GM10248 (cell line): ENCODE measurements at regions of chr3 and their contacts with region 1.

Region 1: DNA sequence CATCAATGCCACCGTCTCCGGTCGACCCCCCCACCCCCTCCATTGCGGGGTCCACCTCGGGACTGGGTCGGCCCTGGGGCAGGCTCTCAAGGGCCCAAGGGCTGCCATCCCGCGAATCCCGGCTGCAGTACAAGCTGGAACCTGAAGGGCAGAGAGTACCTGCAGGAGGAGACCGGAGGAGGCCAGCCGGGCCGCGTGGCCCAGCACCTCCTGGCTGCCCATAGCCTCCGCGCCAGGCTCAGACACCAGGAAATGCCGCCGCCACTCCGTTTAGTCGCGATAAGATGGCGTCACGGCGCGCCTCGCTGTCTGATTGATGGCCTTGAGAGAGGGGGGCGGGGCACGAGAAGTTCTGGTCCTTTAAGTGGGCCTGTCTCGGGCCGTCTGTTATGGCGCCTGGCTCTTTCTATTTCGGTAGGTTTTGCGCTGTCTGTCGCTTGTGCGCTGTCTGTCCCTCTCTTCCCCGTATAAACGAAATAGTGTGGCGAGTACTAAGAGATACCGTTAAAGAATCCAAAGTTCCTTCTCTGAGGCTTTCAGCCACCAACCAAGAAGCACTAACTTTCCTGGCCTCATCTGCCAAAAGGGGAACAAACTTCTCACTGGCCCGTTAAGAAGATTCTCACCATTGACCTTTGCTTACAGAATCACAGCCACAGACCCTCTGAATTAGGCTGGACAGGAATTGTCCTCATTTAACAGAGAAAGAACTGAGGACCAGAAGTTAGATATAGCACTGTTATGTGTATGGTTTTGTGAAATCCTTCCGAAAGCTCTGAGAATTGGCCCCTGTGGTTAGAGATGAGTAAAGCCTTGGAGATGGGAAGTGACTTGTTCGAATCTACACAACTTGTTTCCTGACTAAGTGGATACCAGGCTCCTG is at the start of gene RFT1:
- DNase-seq: peak; percentile 94
- CTCF ChIP-seq: no peak

Region 2: GRCh38 chr3:53114011-53114400 is 16.4 kb before region 1 on chr3:
- CTCF ChIA-PET with region 1: interaction called, 140 read pairs
- POLR2A ChIA-PET with region 1: no interaction called
- DNase-seq: peak; percentile 84
- CTCF ChIP-seq: peak; percentile 89

Region 3: GRCh38 chr3:53140847-53141845 is 10.7 kb after region 1 on chr3:
- CTCF ChIA-PET with region 1: interaction called, 114 read pairs
- POLR2A ChIA-PET with region 1: no interaction called
- DNase-seq: no peak
- CTCF ChIP-seq: no peak

Region 4: DNA sequence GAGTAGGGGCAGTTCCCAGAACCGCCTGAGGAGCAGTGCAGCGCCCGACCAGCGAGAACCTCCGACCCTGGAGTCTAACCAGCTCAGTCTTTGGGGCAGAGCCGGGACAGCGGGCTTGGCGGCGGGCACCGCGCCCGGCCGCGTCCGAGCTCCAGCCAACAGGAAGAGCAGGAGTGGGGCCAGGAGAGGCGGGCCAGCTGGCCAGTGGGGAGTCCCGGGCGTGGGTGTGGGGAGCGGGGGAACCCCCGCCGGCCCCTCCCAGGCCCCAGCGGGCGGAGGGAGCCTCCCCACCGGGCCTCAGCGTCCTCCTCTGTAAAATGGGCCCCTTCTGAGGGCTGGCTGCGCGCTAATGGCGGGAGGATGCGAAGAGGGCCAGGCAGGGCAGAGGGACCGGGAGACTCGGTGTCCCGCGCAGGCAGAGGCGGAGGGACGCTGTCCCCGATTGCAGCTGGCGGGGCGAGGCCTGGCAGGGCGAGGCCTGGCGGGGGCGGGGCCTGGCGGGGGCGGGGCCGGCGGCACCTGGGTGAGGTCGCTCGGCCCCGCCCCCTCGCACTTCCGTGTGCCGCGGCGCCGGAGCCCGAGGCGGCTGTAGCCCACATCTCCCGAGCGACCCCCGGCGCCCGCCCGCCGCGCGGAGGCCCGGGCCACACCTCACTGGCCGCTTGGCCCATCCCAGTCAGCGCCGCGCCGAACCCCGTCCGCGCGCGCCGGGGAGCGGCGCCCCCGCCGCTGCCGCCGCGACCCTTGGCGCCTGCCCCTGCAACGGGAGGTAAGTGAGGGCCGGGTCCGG is 30.4 kb after region 1 on chr3 and contains the start of gene PRKCD:
- CTCF ChIA-PET with region 1: interaction called, 43 read pairs
- POLR2A ChIA-PET with region 1: no interaction called
- DNase-seq: peak; percentile 96
- CTCF ChIP-seq: no peak

Region 5: GRCh38 chr3:53166781-53167291 is 36.4 kb after region 1 on chr3:
- CTCF ChIA-PET with region 1: interaction called, 12 read pairs
- POLR2A ChIA-PET with region 1: no interaction called
- DNase-seq: no peak
- CTCF ChIP-seq: no peak

Region 6: DNA sequence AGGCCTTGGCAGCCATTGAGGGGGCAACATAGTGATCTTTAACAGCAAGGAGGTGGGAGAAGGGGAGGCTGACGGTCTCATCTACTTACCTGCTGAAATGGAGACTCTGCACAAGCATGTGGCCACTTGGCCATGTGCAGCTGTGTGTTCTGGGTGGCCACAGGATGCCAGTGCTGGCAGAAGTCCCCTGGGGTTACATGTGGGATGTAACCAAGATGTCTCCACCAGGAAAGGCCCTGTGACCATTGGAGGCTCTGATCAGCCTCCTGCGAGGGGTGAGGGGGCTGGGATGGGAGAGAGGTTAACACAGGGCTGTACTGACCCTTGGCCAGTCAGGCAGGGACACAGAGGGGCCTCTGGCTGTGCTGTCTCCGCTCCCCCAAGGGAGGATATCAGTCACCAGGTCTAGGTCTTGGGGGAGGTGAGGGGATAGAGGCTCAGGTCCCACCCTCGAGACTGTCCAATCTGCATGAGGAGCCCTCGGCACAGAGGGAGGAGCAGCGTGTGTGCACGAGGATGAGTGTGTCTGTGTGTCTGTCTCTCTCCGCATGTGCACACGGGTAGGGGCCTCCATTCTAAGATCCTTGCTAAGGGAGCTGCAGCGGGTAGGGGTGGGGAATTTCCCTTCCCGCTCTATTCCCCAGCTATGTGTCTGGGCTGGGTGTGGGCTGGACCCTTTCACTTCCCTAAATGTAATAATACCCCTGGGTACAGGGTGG is 50.0 kb after region 1 on chr3:
- CTCF ChIA-PET with region 1: interaction called, 20 read pairs
- POLR2A ChIA-PET with region 1: no interaction called
- DNase-seq: peak; percentile 89
- CTCF ChIP-seq: no peak